ENCODE measurements at regions of chr3 and their contacts with region 1.

Region 1: DNA sequence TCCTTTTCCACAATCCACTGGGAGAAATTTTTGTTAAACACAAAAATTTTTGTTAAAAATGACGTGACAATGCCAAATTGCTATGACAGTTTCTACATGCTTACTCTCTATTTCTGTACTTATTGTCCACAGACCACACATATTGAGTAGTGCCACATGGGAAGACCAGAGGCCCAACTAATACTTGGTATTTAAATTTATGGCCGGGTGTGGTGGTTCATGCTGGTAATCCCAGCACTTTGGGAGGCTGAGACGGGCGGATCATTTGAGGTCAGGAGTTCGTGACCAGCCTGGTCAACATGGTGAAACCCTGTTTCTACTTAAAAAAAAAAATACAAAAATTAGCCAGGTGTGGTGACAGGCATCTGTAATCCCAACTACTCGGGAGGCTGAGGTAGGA is 20.3 kb downstream of the ZBTB11 start:
- DNase-seq: no peak
- ATAC-seq: no peak
- H3K4me3 ChIP-seq: no peak overlapping the region
- H3K27ac ChIP-seq: no peak overlapping the region
- H3K4me1 ChIP-seq: no peaks in the 10 kb centered on the region
- H3K27me3 ChIP-seq: no peaks in the 10 kb centered on the region
- CTCF ChIP-seq: no peak

Region 2: GRCh38 chr3:101146946-101147345 is 509.7 kb before region 1 on chr3:
- intact Hi-C with region 1: no loop called
- DNase-seq: no peak
- ATAC-seq: no peak
- H3K4me3 ChIP-seq: no peak overlapping the region
- H3K27ac ChIP-seq: no peak overlapping the region
- H3K4me1 ChIP-seq: no peaks in the 10 kb centered on the region
- H3K27me3 ChIP-seq: no peaks in the 10 kb centered on the region
- CTCF ChIP-seq: no peak

Region 3: GRCh38 chr3:101602731-101603130 is 53.9 kb before region 1 on chr3:
- intact Hi-C with region 1: loop called in 1 of 2 experiments (anchors 10 kb)
- DNase-seq: no peak
- ATAC-seq: no peak
- H3K4me3 ChIP-seq: no peak overlapping the region
- H3K27ac ChIP-seq: peak overlapping the region; percentile 10
- H3K4me1 ChIP-seq: no peaks in the 10 kb centered on the region
- H3K27me3 ChIP-seq: no peaks in the 10 kb centered on the region
- CTCF ChIP-seq: no peak

Region 4: GRCh38 chr3:101615525-101615924 is 41.1 kb before region 1 on chr3:
- intact Hi-C with region 1: no loop called
- DNase-seq: no peak
- ATAC-seq: no peak
- H3K4me3 ChIP-seq: no peak overlapping the region
- H3K27ac ChIP-seq: no peak overlapping the region
- H3K4me1 ChIP-seq: no peaks in the 10 kb centered on the region
- H3K27me3 ChIP-seq: no peaks in the 10 kb centered on the region
- CTCF ChIP-seq: no peak

Region 5: GRCh38 chr3:101988591-101988990 is 331.9 kb after region 1 on chr3:
- intact Hi-C with region 1: no loop called
- DNase-seq: no peak
- ATAC-seq: no peak
- H3K4me3 ChIP-seq: no peak overlapping the region
- H3K27ac ChIP-seq: no peak overlapping the region
- H3K4me1 ChIP-seq: no peaks in the 10 kb centered on the region
- H3K27me3 ChIP-seq: no peaks in the 10 kb centered on the region
- CTCF ChIP-seq: no peak